Mucosa of descending colon (tissue), 3 donors: ENCODE measurements at regions of chr15 and their contacts with region 1.

Region 1: DNA sequence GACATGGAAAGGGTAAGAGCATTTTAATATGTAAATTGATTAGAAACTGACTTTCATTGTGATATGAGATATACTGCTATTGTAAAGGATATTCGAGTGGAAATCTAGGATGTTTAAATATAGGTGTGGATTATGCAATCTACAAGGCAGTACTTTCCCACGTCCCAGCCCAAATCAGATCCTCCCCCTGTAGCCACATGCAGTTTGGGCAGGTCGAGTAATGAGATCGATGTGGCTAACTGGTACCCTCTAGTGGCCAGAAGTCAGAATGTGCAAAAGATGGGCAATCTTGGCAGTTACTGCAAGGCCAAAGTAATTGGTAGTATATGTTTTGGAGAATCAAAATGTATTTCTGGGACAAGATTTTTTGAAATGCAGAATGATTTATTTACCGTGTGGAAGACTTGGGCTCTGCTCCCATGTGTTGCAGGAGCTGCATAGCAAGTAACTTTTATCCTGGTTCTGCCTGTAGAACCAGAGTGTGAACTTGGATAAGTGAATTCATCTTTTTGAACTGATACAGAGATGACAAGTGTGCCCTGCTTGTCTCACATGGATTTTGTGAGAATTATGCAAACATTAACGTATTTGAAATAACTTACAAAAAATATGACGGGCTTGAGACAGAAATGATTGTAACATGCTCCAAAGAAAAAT is 94.5 kb upstream of the ADAMTSL3 start:
- DNase-seq: peak in 1 of 3 donors; percentile 59
- ATAC-seq: peak; percentile 56
- H3K4me3 ChIP-seq: no peak overlapping the region
- H3K4me1 ChIP-seq: no peaks in the 10 kb centered on the region
- CTCF ChIP-seq: peak; percentile 52

Region 2: GRCh38 chr15:83248151-83249029 is 311.0 kb before region 1 on chr15:
- intact Hi-C with region 1: loop called in 1 of 2 experiments (anchors 5 kb)
- DNase-seq: peak in 1 of 3 donors; percentile 61
- ATAC-seq: peak; percentile 60
- H3K4me3 ChIP-seq: no peak overlapping the region
- H3K4me1 ChIP-seq: no peaks in the 10 kb centered on the region
- CTCF ChIP-seq: no peak

Region 3: GRCh38 chr15:83446904-83447709 is 112.3 kb before region 1 on chr15 and contains the start of gene SH3GL3:
- intact Hi-C with region 1: loop called in 1 of 2 experiments (anchors 10 kb)
- DNase-seq: peak; percentile 56 to 66 (median 66)
- ATAC-seq: peak; percentile 92
- H3K4me3 ChIP-seq: no peak within 1 kb of the TSS
- H3K4me1 ChIP-seq: peaks cover 3% of the 10 kb centered on the region
- CTCF ChIP-seq: no peak
- total RNA-seq, gene SH3GL3: 1.2 TPM in 1 of 3 donors, not detected in the others